AG04450 (cell line): ENCODE measurements at regions of chr16 and their contacts with region 1.

Region 1: GRCh38 chr16:65671-66137 is 6.7 kb downstream of the RHBDF1 start:
- DNase-seq: no peak
- H3K4me3 ChIP-seq: no peak overlapping the region
- H3K27ac ChIP-seq: no peak overlapping the region
- H3K27me3 ChIP-seq: no peaks in the 10 kb centered on the region
- CTCF ChIP-seq: peak; percentile 95

Region 2: DNA sequence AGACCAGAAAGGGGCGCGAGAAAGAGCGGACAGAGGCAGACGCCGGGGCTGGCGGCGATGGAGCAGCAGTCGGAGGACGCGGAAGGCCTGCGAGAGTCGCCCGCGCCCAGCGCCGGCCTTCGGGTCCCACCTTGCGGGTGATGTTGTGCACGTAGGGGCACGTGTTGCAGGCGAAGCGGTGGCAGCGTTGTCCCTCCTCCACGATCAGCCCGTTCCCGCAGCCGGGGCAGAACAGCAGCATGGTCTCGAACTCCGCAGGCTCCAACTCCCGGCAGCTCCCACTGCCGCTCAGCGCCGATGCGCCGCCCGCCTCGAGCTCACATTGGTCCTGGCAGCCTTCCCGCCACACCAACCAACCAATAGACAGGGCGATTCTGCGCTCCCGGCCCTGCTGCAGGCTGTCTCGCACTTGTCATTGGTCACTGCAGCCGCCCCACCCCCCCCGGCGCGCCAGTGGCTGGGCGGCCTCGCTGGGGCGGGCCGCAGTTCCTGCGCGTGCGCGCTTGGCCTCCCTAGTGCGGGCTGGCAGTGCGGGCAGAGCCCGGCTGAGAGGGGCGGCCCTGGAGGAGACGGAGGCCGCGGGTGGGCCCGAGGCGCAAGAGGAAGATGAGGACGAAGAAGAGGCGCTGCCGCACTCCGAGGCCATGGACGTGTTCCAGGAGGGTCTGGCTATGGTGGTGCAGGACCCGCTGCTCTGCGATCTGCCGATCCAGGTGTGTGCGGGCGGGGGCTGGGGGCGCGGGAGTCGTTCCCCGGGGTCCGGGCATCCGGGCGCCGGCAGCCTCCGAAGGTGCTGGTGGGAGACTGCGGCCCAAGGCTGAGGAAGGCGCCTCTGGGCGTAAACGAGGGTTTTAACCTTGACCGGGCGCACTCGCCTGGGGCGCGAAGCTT is 12.1 kb before region 1 on chr16 and contains the starts of genes POLR3K and SNRNP25:
- CTCF ChIA-PET with region 1: interaction called, 15 read pairs
- POLR2A ChIA-PET with region 1: interaction called, 8 read pairs
- DNase-seq: peak; percentile 96
- H3K4me3 ChIP-seq: peak within 1 kb of the TSS; percentile 86
- H3K27ac ChIP-seq: peak within 1 kb of the TSS; percentile 68
- H3K27me3 ChIP-seq: no peaks in the 10 kb centered on the region
- CTCF ChIP-seq: no peak
- polyA plus RNA-seq, gene POLR3K: 13.7 and 14.4 TPM in 2 replicates
- polyA plus RNA-seq, gene SNRNP25: 38.8 and 42.3 TPM in 2 replicates

Region 3: GRCh38 chr16:77807-78443 is 12.2 kb after region 1 on chr16 and contains the start of gene MPG:
- CTCF ChIA-PET with region 1: interaction called, 11 read pairs
- POLR2A ChIA-PET with region 1: interaction called, 5 read pairs
- DNase-seq: no peak
- H3K4me3 ChIP-seq: peak within 1 kb of the TSS; percentile 76
- H3K27ac ChIP-seq: peak within 1 kb of the TSS; percentile 98
- H3K27me3 ChIP-seq: no peaks in the 10 kb centered on the region
- CTCF ChIP-seq: no peak
- polyA plus RNA-seq, gene MPG: 47.3 and 78.3 TPM in 2 replicates

Region 4: DNA sequence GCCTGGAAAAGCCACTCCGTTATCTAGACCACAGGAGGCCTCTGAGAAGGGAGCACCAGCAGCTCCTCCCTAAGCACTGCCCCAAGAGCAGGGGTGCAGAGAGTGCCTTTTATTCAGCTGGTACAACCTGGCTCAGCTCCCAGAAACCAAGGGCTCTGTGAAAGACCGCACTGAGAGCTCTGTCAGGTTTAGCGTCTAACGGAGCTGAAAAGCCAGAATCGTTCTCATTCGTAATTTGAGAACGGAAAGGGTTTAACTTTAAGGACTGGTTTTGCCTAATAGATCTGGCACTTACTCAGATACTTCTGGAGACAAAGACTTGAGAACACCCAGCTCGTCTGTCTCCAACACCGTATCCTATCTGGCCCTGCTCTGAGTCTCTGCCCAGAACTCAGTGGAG is 25.8 kb after region 1 on chr16:
- CTCF ChIA-PET with region 1: interaction called, 242 read pairs
- POLR2A ChIA-PET with region 1: interaction called, 9 read pairs
- DNase-seq: no peak
- H3K4me3 ChIP-seq: no peak overlapping the region
- H3K27ac ChIP-seq: no peak overlapping the region
- H3K27me3 ChIP-seq: no peaks in the 10 kb centered on the region
- CTCF ChIP-seq: no peak

Region 5: GRCh38 chr16:96935-97381 is 31.3 kb after region 1 on chr16:
- CTCF ChIA-PET with region 1: interaction called, 242 read pairs
- POLR2A ChIA-PET with region 1: interaction called, 9 read pairs
- DNase-seq: no peak
- H3K4me3 ChIP-seq: no peak overlapping the region
- H3K27ac ChIP-seq: no peak overlapping the region
- H3K27me3 ChIP-seq: no peaks in the 10 kb centered on the region
- CTCF ChIP-seq: peak; percentile 99